ENCODE measurements at regions of chr14 and their contacts with region 1.

Region 1: GRCh38 chr14:76876076-76876475 is 49.9 kb downstream of the LRRC74A start:
- DNase-seq: peak; percentile 31 to 51
- ATAC-seq: peak; percentile 84 to 87
- H3K4me3 ChIP-seq: no peak overlapping the region
- H3K27ac ChIP-seq: no peak overlapping the region
- H3K4me1 ChIP-seq: no peaks in the 10 kb centered on the region
- H3K27me3 ChIP-seq: no peaks in the 10 kb centered on the region
- CTCF ChIP-seq: peak; percentile 86 to 95 (median 90)
- POLR2A ChIP-seq: no peak

Region 2: GRCh38 chr14:76615331-76615730 is 260.7 kb before region 1 on chr14:
- in situ Hi-C with region 1: no loop called
- intact Hi-C with region 1: no loop called
- DNase-seq: no peak
- ATAC-seq: no peak
- H3K4me3 ChIP-seq: no peak overlapping the region
- H3K27ac ChIP-seq: no peak overlapping the region
- H3K4me1 ChIP-seq: no peaks in the 10 kb centered on the region
- H3K27me3 ChIP-seq: peaks cover 0 to 3% (median 2%) of the 10 kb centered on the region in 3 donors
- CTCF ChIP-seq: no peak
- POLR2A ChIP-seq: no peak

Region 3: DNA sequence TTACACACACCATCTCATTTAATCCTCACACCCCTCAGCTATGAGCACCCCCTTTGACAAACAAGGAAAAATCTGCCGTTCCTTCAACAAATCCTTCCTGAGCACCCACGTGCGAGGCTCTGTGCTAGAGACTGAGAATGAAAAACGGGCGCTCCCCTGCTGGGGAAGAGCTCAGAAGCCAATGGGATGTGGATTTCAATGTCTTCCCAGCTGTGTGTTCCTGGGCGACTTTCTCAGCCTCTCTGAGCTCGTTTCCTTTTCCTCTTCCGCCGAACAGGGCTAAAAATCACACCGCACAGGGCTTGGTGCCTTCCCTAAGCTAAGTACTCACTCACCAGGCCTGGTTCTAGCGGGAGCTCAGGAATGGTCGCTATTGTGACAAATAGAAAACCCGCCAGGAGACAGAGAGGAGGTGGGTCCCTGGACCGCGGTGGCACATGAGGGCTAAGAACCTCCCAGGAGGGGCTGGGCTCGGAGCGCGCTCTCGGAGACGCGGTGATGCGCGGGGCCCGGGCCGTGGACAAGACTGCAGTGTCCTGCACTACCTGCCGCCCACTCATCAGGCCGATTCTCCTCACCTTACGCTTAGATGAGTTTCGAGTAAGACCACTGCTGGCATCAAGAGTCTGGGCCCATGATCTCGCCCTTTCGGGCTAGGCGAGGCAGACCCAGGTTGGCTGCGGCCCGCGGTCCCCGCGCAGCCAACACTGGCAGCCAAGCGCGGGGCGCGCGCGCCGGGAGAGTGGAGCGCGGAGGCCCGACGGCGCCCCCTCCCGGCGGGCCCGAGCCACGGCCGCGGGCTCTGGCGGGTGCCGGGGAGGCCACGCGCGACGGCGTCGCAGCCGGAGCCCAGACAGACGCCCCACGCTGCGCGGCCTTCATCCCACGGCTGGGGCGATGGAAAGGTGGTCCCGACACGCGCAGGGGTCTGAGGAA is 248.5 kb after region 1 on chr14:
- in situ Hi-C with region 1: no loop called
- intact Hi-C with region 1: loop called (anchors 2 kb)
- DNase-seq: peak in 1 of 2 donors; percentile 46
- ATAC-seq: peak; percentile 57 to 64
- H3K4me3 ChIP-seq: peak overlapping the region; percentile 41 to 63 (median 52)
- H3K27ac ChIP-seq: peak overlapping the region; percentile 41 to 99 (median 90)
- H3K4me1 ChIP-seq: peaks cover 48 to 53% of the 10 kb centered on the region in 2 donors
- H3K27me3 ChIP-seq: no peaks in the 10 kb centered on the region
- CTCF ChIP-seq: peak in 4 of 5 experiments; percentile 93 to 96 (median 94)
- POLR2A ChIP-seq: no peak

Region 4: DNA sequence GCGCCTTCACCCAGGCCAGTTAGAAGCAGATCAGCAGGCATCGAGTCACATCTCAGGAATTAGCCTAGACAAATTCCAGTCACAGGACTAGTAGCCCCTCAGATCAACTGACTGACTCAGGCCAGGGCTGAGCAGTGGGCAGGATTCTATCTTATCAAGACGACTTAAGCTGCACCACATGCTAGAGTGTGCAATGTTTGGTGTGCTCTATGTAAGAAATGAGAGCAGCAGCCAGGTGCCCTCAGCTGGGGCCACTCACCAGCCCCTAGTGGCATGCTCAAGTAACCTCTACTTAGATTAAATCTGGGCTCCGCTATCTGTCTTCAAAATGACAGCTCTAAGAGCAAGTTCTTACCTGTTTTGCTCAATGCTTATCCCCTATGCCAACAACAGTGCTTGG is 414.7 kb after region 1 on chr14:
- in situ Hi-C with region 1: loop called in 1 of 4 experiments (anchors 25 kb)
- intact Hi-C with region 1: no loop called
- DNase-seq: no peak
- ATAC-seq: no peak
- H3K4me3 ChIP-seq: no peak overlapping the region
- H3K27ac ChIP-seq: no peak overlapping the region
- H3K4me1 ChIP-seq: no peaks in the 10 kb centered on the region
- H3K27me3 ChIP-seq: no peaks in the 10 kb centered on the region
- CTCF ChIP-seq: no peak
- POLR2A ChIP-seq: no peak

Measured in gastrocnemius medialis (tissue), 4 donors.